Prostate gland (tissue), 2 donors: ENCODE measurements at regions of chr3 and their contacts with region 1.

Region 1: DNA sequence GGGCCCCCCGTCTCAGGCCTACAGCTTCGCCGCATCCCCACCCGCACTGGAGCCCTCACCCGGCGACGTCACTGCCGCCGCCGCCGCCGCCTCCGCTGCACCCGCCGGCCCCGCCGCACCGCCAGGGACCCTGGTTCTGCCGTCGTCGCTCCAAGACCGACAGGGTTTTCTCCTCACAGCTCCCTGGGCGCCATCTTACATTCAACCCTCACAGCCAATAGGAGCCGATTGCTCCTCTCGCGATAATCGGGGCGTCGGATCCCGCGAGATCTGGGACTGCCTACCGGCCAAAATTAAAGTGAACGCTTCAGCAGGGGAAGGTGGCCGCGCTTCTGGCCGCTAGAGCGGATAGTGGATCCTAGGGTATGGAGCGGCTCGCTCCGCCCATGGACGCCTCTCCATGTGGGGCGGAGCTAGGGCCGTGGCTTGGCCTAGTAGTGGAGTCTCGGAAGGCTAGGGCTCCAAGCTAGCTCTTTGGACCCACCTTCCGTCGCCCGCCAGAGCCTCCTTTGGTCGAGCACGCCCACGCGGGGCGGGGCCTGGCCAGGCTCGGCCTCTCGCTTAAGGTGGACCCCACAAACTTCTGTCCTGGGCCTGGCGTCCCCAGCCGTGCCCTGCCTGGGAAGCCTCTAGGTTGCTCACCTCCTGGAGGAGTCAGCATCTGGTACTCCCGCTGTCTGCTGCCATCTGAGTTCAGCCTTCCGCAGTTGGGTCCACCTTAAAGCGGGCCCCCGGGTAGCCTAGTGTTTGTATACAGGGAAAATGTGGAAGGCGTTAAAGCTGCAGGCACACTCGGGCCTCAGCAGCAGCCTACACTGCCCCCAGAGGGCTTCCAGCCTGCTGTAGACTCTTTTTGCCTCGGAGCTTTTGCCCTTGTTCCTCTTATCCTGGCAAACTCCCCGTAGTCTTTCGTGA is at the start of gene QRICH1:
- DNase-seq: peak; percentile 96
- H3K4me3 ChIP-seq: peak within 1 kb of the TSS; percentile 78 to 100
- H3K27ac ChIP-seq: peak within 1 kb of the TSS; percentile 95 to 97
- H3K4me1 ChIP-seq: peaks cover 6% of the 10 kb centered on the region
- H3K27me3 ChIP-seq: no peaks in the 10 kb centered on the region
- CTCF ChIP-seq: peak in 2 of 4 experiments; percentile 47 to 63
- POLR2A ChIP-seq: peak; percentile 73
- total RNA-seq, gene QRICH1: 60.1 to 132 TPM

Region 2: DNA sequence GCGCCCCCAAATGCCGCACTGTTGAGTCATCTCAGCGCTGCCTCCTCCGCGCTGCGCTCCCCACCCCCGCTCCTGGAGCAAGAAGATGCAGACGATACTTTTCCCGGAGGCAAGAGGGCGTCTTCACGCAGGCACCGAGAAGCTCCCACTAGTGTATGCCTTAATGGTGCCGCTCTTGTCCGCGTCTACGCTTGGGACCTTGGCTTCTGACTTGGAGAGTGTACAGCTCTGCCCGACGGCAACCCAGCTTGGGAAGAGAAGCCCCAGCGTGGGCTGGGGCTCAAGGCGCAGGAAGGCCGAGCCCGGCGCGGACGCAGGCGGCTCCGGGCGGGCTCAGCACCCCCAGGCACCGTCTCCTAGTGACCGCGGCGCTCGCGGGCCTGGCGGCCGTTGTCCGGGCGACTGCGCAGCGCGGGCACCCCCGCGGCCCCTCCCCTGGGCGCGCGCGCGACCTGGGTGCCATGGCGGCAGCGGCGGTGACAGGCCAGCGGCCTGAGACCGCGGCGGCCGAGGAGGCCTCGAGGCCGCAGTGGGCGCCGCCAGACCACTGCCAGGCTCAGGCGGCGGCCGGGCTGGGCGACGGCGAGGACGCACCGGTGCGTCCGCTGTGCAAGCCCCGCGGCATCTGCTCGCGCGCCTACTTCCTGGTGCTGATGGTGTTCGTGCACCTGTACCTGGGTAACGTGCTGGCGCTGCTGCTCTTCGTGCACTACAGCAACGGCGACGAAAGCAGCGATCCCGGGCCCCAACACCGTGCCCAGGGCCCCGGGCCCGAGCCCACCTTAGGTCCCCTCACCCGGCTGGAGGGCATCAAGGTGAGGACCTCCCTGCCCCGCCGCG is 104.1 kb before region 1 on chr3 and contains the start of gene P4HTM:
- intact Hi-C with region 1: loop called (anchors 10 kb)
- DNase-seq: peak; percentile 80
- H3K4me3 ChIP-seq: peak within 1 kb of the TSS; percentile 74 to 75
- H3K27ac ChIP-seq: peak within 1 kb of the TSS; percentile 85 to 88
- H3K4me1 ChIP-seq: peaks cover 3% of the 10 kb centered on the region
- H3K27me3 ChIP-seq: no peaks in the 10 kb centered on the region
- CTCF ChIP-seq: peak in 3 of 4 experiments; percentile 23 to 48 (median 36)
- POLR2A ChIP-seq: peak; percentile 34
- total RNA-seq, gene P4HTM: 56.0 to 101 TPM

Region 3: GRCh38 chr3:49021813-49022687 is 72.1 kb before region 1 on chr3 and contains the start of gene NDUFAF3:
- intact Hi-C with region 1: loop called (anchors 5 kb)
- DNase-seq: peak; percentile 87
- H3K4me3 ChIP-seq: peak within 1 kb of the TSS; percentile 79 to 86
- H3K27ac ChIP-seq: peak within 1 kb of the TSS; percentile 99 to 100
- H3K4me1 ChIP-seq: peaks cover 2% of the 10 kb centered on the region
- H3K27me3 ChIP-seq: no peaks in the 10 kb centered on the region
- CTCF ChIP-seq: peak; percentile 85 to 99 (median 92)
- POLR2A ChIP-seq: peak; percentile 53
- total RNA-seq, gene NDUFAF3: 168 to 183 TPM

Region 4: DNA sequence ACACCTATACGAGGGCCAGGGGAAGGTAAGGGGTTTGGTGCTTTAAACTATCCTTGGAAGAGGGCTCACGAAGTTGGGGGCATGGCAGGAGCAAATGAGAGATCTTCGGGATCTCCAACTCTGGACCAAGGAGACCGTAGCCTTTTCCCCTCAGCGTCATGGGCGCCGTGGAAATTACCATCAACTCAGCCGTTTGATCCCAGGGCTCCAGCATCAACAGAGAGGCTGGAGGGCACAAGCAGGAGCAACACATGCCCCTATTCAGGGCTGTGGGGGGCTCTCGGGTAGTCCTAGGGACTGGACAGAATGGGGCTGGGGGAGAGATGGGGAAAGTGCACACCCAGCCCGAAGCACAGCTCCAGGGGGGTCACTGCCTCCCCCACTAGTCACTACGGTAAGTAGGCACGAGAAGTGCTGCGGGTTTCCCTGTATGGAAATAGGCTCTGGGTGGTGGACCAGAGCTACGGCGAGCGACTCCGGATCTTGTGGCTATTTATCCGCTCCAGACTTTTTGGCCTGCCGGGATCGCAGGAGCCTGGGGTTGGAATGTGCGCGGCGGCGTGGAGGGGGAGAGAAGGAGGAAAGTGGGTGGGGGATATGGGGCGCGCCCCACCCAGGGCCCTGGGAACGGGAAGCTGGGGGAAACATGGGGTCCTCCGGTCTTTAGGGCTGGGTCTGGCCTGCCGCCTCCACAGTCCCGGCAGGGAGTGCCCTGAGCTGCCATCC is 39.3 kb after region 1 on chr3:
- intact Hi-C with region 1: loop called (anchors 5 kb)
- DNase-seq: peak; percentile 83
- H3K4me3 ChIP-seq: peak overlapping the region; percentile 43 to 63
- H3K27ac ChIP-seq: peak overlapping the region; percentile 81
- H3K4me1 ChIP-seq: peaks cover 5% of the 10 kb centered on the region
- H3K27me3 ChIP-seq: no peaks in the 10 kb centered on the region
- CTCF ChIP-seq: peak in 1 of 4 experiments; percentile 2
- POLR2A ChIP-seq: peak; percentile 17

Region 5: DNA sequence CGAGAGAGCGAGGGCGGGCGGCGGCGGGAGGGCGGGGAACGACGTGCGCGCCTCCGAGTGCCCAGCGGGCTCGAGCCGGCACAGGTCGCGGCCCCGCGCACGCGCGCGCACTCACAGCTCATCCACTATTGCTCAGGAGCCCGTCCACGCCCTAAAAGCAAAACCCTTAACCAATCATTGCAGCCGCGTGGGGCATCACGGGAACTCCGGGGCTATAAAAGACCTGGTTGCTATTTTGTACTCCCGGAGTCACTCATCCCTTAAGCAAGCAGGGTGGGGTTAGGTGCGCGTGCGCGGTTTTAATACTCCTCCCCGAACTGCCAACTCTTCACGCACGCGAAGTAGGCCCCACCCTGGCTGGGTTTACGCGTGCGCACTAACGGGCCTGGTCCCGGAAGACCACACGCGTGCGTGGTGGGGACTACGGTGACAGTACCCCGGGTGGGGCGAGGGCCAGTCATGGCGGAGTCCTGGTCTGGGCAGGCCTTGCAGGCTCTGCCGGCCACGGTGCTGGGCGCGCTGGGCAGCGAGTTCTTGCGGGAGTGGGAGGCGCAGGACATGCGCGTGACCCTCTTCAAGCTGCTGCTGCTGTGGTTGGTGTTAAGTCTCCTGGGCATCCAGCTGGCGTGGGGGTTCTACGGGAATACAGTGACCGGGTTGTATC is 318.0 kb after region 1 on chr3 and contains the starts of genes RHOA and TCTA:
- intact Hi-C with region 1: loop called (anchors 5 kb)
- DNase-seq: peak; percentile 99
- H3K4me3 ChIP-seq: peak within 1 kb of the TSS; percentile 88 to 98
- H3K27ac ChIP-seq: peak within 1 kb of the TSS; percentile 89 to 97
- H3K4me1 ChIP-seq: peaks cover 11% of the 10 kb centered on the region
- H3K27me3 ChIP-seq: no peaks in the 10 kb centered on the region
- CTCF ChIP-seq: peak in 1 of 4 experiments; percentile 8
- POLR2A ChIP-seq: peak; percentile 81
- total RNA-seq, gene RHOA: 296 to 343 TPM
- total RNA-seq, gene TCTA: 39.6 to 70.0 TPM